Right cardiac atrium (tissue), 5 donors: ENCODE measurements at regions of chr2 and their contacts with region 1.

Region 1: GRCh38 chr2:207046724-207047123 is 107.4 kb downstream of the CPO start:
- DNase-seq: no peak
- ATAC-seq: peak; percentile 78 to 80
- H3K4me3 ChIP-seq: no peak overlapping the region
- H3K27ac ChIP-seq: no peak overlapping the region
- H3K4me1 ChIP-seq: no peaks in the 10 kb centered on the region
- H3K27me3 ChIP-seq: no peaks in the 10 kb centered on the region

Region 2: DNA sequence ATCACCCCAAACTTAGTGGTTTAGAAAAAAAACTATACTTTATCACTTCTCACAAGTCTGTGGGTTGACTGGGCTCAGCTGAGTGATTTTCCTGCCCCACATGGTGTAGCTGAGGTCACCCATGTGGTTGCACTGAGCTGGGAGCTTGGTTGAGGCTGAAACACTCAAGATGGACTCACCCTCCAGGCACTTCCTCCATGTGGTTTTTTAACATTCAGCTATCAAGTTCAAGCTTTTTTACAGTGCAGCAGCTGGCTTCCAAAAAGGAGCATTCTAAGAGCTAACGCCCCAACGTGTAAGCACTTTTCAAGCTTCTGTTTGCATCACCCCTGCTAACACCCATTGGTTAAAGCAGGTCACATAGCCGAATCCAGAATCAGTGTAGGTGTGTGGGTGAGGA is 377.2 kb after region 1 on chr2:
- intact Hi-C with region 1: no loop called
- DNase-seq: no peak
- ATAC-seq: no peak
- H3K4me3 ChIP-seq: no peak overlapping the region
- H3K27ac ChIP-seq: no peak overlapping the region
- H3K4me1 ChIP-seq: no peaks in the 10 kb centered on the region
- H3K27me3 ChIP-seq: no peaks in the 10 kb centered on the region

Region 3: DNA sequence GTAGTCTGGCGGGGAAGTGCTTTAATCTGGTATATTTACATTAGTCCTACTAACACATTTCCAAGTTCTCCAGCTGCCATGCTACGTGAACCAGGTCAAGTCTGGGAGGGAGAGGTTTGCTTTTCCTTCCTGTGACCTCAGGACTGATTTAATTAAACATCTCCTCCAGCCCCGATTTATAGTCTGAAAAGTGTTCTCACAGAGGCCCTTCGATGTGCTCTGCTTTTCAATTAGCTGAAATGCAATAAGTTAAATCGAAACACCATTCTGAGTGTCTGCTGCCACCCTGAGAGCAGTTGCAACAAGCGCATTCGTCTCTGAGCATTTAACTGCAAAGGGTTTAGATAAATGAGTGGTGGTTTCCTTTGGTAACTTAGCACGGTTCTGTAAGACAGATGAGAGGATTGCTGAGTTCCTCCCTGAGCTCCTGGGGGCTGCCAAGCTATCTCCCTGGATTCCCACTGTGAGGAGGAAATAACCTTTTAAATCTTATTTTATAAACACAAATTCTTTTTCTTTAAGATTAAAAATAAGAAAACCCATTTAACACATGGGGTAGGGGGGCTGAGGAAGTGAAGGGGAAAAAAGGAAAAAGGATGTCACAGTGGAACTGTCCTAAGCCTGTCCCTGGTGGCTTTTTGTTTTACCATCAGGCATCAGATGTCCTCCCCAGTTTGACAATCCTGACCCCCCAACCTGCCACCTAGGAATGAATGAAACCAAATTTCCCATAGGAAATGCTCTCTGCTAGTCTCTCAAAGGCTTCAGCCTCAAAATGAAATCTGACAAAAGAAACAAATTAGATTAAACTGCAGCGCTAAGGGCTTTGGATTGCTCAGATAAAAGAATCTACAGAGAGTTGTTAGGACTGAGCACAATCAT is 426.6 kb after region 1 on chr2:
- intact Hi-C with region 1: loop called in 2 of 4 experiments (anchors 10 kb)
- DNase-seq: peak in 2 of 3 donors; percentile 33 to 50
- ATAC-seq: peak; percentile 83 to 89
- H3K4me3 ChIP-seq: no peak overlapping the region
- H3K27ac ChIP-seq: no peak overlapping the region
- H3K4me1 ChIP-seq: no peaks in the 10 kb centered on the region
- H3K27me3 ChIP-seq: no peaks in the 10 kb centered on the region